ENCODE measurements at regions of chr6 and their contacts with region 1.

Region 1: DNA sequence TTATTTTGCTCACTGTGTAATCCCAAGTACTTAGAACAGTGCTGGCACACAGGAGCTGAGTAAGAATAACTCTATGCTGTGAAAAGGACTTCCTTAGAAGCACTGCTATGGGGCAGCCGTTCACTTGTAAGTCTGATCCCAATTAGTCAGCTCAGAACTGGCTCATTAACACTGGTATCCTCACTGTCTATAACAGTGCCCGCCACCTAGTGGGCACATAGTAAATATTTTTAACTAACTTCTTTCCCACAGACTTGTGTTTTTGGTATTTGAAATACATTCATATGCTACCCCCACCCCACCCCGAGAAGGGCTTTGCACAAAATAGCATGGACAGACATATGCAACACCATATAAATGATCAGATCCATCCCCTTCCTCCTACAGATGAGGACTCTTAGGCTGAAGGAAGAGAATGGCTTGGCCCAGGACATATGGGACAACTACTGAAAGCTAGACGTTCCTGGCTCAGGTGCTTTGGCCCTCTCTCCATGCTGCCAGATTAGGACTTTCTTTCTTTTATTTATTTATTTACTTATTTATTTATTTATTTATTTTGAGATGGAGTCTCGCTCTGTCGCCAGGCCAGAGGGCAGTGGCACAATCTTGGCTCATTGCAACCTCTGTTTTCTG is 47.1 kb downstream of the DST start:
- DNase-seq: peak; percentile 64
- H3K4me3 Mint-ChIP-seq: no peak overlapping the region
- H3K27ac Mint-ChIP-seq: no peak overlapping the region
- H3K4me1 Mint-ChIP-seq: peaks cover 30% of the 10 kb centered on the region
- H3K27me3 Mint-ChIP-seq: no peaks in the 10 kb centered on the region

Region 2: GRCh38 chr6:56359201-56359899 is 236.3 kb before region 1 on chr6:
- CTCF ChIA-PET with region 1: interaction called, 23 read pairs
- POLR2A ChIA-PET with region 1: no interaction called
- intact Hi-C with region 1: loop called (anchors 1 kb)
- DNase-seq: peak; percentile 71
- H3K4me3 Mint-ChIP-seq: no peak overlapping the region
- H3K27ac Mint-ChIP-seq: no peak overlapping the region
- H3K4me1 Mint-ChIP-seq: peaks cover 6% of the 10 kb centered on the region
- H3K27me3 Mint-ChIP-seq: peaks cover 5% of the 10 kb centered on the region

Region 3: DNA sequence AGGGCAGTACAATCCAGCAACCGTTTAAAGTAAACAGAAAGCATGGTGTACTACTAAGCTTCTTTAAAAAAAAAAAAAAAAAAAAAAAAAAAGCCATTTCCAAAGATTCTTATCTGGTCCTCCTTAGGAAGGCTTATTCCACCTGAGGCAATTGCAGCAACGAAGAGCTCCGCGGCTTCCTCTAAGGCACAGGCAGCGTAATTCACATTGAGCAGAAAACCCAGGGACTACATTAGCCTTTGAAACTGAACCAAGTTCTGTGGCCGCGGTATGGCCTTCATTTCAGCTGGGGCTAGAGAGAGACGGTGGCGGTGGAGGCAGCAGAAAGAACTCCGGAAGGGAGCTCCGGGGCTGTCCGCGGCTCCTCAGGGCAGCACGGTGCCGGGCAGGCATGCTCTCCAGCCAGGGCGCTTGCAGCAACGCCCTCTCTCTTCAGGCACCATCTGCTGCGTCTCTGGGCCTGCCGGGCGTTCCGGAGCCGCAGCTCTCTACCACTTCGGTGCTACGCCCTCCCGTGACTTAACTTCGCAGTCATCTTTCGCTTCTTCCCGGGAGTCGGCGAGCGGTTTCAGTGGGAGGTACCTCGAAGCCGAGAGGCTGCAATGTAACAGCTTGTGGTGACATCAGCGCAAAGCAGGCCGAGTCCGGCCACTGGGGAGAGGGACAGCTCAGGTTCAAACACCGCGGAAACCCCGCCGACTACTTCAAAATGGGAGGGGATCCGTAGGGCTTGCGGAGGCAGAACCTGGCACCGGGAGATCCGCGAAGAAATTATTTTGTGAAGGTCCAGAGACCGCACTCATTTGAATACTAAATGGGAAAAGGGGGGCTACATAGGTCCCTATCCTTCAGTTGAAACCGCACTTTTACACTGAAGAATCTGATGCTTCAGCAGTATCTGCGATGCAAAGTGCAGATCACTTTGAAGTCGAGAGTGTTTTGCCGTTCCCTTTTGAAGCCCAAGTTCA is 53.0 kb before region 1 on chr6:
- CTCF ChIA-PET with region 1: interaction called, 14 read pairs
- POLR2A ChIA-PET with region 1: no interaction called
- intact Hi-C with region 1: loop called (anchors 1 kb)
- DNase-seq: peak; percentile 84
- H3K4me3 Mint-ChIP-seq: no peak overlapping the region
- H3K27ac Mint-ChIP-seq: no peak overlapping the region
- H3K4me1 Mint-ChIP-seq: no peaks in the 10 kb centered on the region
- H3K27me3 Mint-ChIP-seq: no peaks in the 10 kb centered on the region

Region 4: DNA sequence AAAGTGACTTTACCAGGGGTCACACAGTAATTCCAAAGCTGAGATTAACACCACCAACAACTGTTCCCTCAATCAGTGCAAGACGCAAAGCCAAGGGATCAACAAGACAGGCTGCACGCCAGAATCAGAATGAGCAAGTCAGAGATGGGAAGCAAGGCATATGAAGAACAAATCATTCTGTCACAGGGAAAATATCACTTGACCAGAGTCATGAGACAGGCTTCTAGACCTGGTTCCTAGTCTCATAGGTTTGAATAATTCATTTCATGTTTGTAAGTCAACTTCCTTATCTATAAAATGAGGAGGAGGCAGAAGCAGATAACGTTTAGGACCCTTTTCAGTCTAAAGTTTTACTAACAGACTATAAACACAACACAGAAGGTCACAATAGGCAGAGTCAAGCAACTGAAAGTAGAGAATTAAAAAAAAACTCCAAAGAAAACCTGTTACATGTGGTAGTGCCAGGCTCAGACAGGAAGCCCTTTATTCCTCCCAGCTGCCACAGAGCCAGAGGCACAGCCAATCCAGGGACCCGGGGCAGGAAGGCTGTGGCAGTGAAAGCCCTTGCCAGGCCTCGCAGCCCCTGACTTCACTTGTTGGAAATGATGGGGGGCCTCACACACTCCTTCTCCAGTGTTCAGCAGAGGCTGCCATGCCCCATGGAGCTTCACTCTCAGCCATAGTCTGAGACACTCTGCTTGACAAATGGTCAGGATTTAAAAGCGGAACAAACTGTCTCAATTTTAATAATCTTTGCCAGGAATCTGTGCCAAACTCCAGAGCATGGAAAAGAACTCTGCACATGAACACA is 76.2 kb after region 1 on chr6:
- CTCF ChIA-PET with region 1: no interaction called
- POLR2A ChIA-PET with region 1: no interaction called
- intact Hi-C with region 1: no loop called
- DNase-seq: no peak
- H3K4me3 Mint-ChIP-seq: no peak overlapping the region
- H3K27ac Mint-ChIP-seq: no peak overlapping the region
- H3K4me1 Mint-ChIP-seq: no peaks in the 10 kb centered on the region
- H3K27me3 Mint-ChIP-seq: peaks cover 4% of the 10 kb centered on the region

Region 5: DNA sequence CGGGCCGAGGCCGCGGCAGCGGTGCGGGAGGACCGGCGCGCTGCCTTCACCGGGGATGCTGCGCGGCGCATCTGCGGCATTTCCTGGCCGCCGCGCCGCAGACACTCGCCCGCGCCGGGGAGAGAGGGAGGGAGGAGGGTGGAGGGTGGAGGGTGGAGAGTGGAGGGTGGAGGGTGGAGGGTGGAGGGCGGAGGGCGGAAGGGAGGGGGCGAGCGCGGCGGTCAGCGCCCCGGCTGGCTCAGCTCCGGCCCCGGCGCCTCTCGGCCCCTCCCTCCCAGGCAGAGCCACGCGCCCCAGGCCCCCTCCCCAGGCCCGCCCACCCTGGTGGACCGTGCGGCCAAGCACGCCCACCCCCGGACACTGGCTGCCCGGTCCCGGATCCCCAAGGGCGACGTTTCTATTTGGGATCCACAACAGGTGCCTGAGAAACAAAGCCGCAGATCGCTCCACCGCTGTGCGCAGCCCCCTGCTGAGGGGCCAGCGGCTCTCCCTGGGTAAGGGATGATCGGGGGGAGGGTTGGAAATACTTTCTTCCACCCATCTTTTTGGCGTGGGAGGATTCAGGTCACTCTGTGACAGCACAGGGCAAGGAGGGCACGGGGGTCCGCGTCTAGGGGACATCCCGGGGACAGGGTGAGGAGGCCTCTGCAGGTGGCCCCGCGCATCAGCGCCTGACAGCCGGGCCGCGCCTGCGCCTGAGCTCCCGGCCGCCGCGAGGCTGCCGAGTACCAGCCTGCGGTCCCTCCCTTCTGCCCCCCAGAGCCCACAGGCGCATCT is 248.2 kb after region 1 on chr6:
- CTCF ChIA-PET with region 1: no interaction called
- POLR2A ChIA-PET with region 1: no interaction called
- intact Hi-C with region 1: loop called (anchors 2 kb)
- DNase-seq: peak; percentile 76
- H3K4me3 Mint-ChIP-seq: peak overlapping the region; percentile 70
- H3K27ac Mint-ChIP-seq: no peak overlapping the region
- H3K4me1 Mint-ChIP-seq: peaks cover 7% of the 10 kb centered on the region
- H3K27me3 Mint-ChIP-seq: peaks cover 37% of the 10 kb centered on the region